ENCODE measurements at regions of chr4 and their contacts with region 1.

Region 1: GRCh38 chr4:68368691-68369480 is 19.0 kb upstream of the YTHDC1 start:
- DNase-seq: peak; percentile 60
- H3K4me3 Mint-ChIP-seq: peak overlapping the region; percentile 61
- H3K27ac Mint-ChIP-seq: peak overlapping the region; percentile 93
- H3K4me1 Mint-ChIP-seq: peaks cover 25% of the 10 kb centered on the region
- H3K27me3 Mint-ChIP-seq: no peaks in the 10 kb centered on the region
- CTCF ChIP-seq: no peak

Region 2: GRCh38 chr4:68342134-68342533 is 26.8 kb before region 1 on chr4:
- CTCF ChIA-PET with region 1: interaction called, 4 read pairs
- POLR2A ChIA-PET with region 1: interaction called, 136 read pairs
- intact Hi-C with region 1: no loop called
- DNase-seq: peak; percentile 74
- H3K4me3 Mint-ChIP-seq: peak overlapping the region; percentile 31
- H3K27ac Mint-ChIP-seq: peak overlapping the region; percentile 90
- H3K4me1 Mint-ChIP-seq: peaks cover 27% of the 10 kb centered on the region
- H3K27me3 Mint-ChIP-seq: no peaks in the 10 kb centered on the region
- CTCF ChIP-seq: no peak

Region 3: DNA sequence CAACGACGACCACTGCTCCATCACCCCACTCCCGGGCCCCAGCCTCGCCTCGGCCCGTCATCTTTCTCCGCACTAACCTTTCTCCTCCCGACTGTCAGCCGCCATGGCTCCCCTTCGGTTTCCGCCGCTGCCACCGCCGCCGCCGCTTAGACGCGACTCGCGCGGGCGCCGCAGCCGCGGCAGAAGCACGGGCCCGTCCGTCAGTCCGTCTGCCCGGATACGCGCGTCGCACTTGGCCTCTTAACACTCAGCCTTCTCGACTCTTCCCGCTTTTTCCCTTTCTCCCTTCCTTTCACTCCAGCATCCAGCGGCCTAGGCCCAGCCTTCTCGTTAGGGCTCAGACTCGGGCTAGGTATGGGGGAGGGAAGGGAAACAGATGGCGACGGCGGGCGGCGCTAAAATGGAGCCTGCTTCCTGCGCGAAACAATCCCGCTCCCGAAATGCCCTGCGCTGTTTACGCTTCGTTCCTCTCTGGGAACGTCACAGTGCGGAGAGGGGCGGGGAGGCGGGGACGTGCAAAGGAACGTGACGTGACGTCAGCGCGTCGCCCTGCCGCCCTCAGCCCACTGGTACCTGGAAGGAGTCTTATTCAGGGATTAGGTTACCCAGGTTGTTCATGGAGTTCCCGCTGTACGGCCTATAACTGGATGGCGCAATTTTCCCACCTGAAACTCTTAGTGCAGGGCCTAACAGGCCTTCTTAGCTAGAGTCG is 19.1 kb before region 1 on chr4 and contains the start of gene YTHDC1:
- CTCF ChIA-PET with region 1: interaction called, 4 read pairs
- POLR2A ChIA-PET with region 1: interaction called, 136 read pairs
- intact Hi-C with region 1: loop called (anchors 1 kb)
- DNase-seq: peak; percentile 96
- H3K4me3 Mint-ChIP-seq: peak within 1 kb of the TSS; percentile 95
- H3K27ac Mint-ChIP-seq: peak within 1 kb of the TSS; percentile 93
- H3K4me1 Mint-ChIP-seq: peaks cover 12% of the 10 kb centered on the region
- H3K27me3 Mint-ChIP-seq: no peaks in the 10 kb centered on the region
- CTCF ChIP-seq: no peak
- total RNA-seq, gene YTHDC1: 117 and 123 TPM in 2 replicates